ENCODE measurements at regions of chr11 and their contacts with region 1.

Region 1: GRCh38 chr11:68889948-68890446 is 13.6 kb downstream of the MRPL21 start:
- DNase-seq: peak; percentile 43 to 83
- H3K4me3 ChIP-seq: no peak overlapping the region
- H3K27ac ChIP-seq: peak overlapping the region; percentile 78 to 89
- H3K4me1 ChIP-seq: peaks cover 5 to 34% (median 21%) of the 10 kb centered on the region in 4 donors
- H3K27me3 ChIP-seq: no peaks in the 10 kb centered on the region
- CTCF ChIP-seq: peak; percentile 42 to 62

Region 2: GRCh38 chr11:68843703-68844312 is 46.2 kb before region 1 on chr11:
- intact Hi-C with region 1: loop called (anchors 5 kb)
- DNase-seq: peak; percentile 41 to 74
- H3K4me3 ChIP-seq: peak overlapping the region; percentile 90 to 95
- H3K27ac ChIP-seq: no peak overlapping the region
- H3K4me1 ChIP-seq: peaks cover 0 to 51% (median 29%) of the 10 kb centered on the region in 4 donors
- H3K27me3 ChIP-seq: no peaks in the 10 kb centered on the region
- CTCF ChIP-seq: peak; percentile 29 to 44